Mammary epithelial cell (primary cell): ENCODE measurements at regions of chr18 and their contacts with region 1.

Region 1: DNA sequence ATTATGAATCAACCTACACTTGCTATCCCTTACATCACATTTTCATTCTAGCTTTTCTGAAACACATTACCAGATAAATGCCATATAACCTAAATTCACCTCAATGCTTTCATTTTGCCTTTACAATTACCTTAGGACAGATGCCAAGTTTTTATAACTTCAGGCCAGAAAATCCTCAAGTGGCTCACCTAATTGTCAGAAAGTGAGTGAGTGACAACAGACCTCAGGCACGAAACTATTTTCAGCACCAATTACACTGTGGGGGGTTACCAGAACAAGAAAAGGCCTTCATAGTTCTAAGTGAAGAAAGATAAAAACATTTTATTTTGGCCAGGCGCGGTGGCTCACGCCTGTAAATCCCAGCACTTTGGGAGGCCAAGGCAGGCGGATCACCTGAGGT is 52.3 kb upstream of the ST8SIA5 start:
- DNase-seq: no peak
- H3K4me3 ChIP-seq: no peak overlapping the region
- H3K27ac ChIP-seq: no peak overlapping the region
- H3K4me1 ChIP-seq: no peaks in the 10 kb centered on the region
- H3K27me3 ChIP-seq: no peaks in the 10 kb centered on the region
- CTCF ChIP-seq: no peak

Region 2: DNA sequence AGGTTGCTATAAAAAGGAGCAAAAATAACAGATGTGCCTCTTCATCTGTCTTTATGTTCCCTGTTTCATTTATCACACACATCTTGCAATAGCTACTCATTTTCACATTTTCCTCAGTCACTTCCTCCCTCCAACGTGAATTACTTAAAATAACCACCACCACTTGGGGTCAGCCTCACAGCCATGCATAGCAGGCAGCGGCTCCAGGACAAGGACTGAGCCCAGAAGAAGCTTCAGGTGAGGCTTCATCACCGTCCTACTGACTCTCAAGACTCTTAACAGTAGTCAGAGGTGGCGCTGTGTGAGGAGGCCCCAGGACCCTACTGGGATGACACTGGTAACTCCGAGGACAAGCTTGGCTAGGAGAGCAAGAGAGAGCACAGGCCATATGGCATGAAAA is 36.8 kb before region 1 on chr18:
- CTCF ChIA-PET with region 1: no interaction called
- dilution Hi-C with region 1: loop called (anchors 5 kb)
- in situ Hi-C with region 1: no loop called
- intact Hi-C with region 1: no loop called
- DNase-seq: no peak
- H3K4me3 ChIP-seq: no peak overlapping the region
- H3K27ac ChIP-seq: no peak overlapping the region
- H3K4me1 ChIP-seq: no peaks in the 10 kb centered on the region
- H3K27me3 ChIP-seq: no peaks in the 10 kb centered on the region
- CTCF ChIP-seq: no peak